ENCODE measurements at regions of chr12 and their contacts with region 1.

Region 1: DNA sequence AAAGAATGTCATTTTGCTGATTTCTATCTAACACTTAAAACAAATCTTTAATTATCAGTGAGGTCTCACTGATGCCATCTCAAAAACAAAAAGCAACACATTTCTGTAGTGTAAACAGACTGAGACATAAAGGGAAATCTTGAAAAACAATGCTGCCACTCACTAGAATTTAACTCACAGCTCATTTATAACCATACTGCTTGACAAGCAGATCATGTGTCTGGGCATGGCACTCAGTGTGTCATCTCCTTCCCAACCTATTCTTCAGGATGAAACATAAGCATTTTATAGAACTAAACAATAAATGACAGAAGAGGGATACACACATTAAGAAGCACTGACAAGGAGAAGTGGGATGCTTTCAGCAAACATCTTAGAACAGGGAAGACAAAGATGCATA is 22.4 kb downstream of the ATF7 start:
- DNase-seq: no peak
- ATAC-seq: no peak
- H3K4me3 ChIP-seq: no peak overlapping the region
- H3K27ac ChIP-seq: no peak overlapping the region
- H3K4me1 ChIP-seq: peaks cover 29% of the 10 kb centered on the region
- H3K27me3 ChIP-seq: no peaks in the 10 kb centered on the region
- CTCF ChIP-seq: no peak

Region 2: GRCh38 chr12:53770281-53770680 is 166.5 kb after region 1 on chr12:
- CTCF ChIA-PET with region 1: no interaction called
- POLR2A ChIA-PET with region 1: no interaction called
- in situ Hi-C with region 1: no loop called
- intact Hi-C with region 1: no loop called
- DNase-seq: peak; percentile 91
- ATAC-seq: peak; percentile 93
- H3K4me3 ChIP-seq: no peak overlapping the region
- H3K27ac ChIP-seq: peak overlapping the region; percentile 98
- H3K4me1 ChIP-seq: peaks cover 51% of the 10 kb centered on the region
- H3K27me3 ChIP-seq: no peaks in the 10 kb centered on the region
- CTCF ChIP-seq: no peak

Region 3: GRCh38 chr12:53860426-53861345 is 256.9 kb after region 1 on chr12:
- CTCF ChIA-PET with region 1: no interaction called
- POLR2A ChIA-PET with region 1: interaction called, 11 read pairs
- in situ Hi-C with region 1: no loop called
- intact Hi-C with region 1: no loop called
- DNase-seq: no peak
- ATAC-seq: no peak
- H3K4me3 ChIP-seq: no peak overlapping the region
- H3K27ac ChIP-seq: peak overlapping the region; percentile 59; the same call in 1 of the 2 replicates
- H3K4me1 ChIP-seq: no peaks in the 10 kb centered on the region
- H3K27me3 ChIP-seq: no peaks in the 10 kb centered on the region
- CTCF ChIP-seq: no peak